RWPE1 (cell line): ENCODE measurements at regions of chr2 and their contacts with region 1.

Region 1: GRCh38 chr2:80499095-80499494 is 194.5 kb upstream of the LRRTM1 start:
- DNase-seq: peak; percentile 29
- H3K27ac ChIP-seq: no peak overlapping the region
- CTCF ChIP-seq: peak; percentile 42

Region 2: DNA sequence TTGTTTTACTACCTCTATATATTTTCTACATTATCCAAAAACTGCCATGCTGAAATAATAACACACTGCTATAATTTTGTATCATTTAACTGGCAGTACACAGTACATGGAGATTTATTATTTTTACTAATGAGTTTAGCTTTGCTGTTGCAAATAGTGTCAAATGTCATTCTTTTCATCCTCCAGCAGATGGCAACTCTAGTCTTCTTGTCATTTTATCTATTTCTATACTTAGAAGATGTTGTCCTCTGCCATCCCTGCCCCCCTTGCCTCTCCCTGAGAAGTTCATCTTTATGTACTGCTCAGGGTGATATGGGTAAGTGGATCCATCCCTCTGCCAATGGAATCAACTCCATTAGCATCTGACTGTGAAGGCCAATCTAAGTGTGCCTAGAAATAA is 172.9 kb before region 1 on chr2:
- CTCF ChIA-PET with region 1: interaction called, 11 read pairs
- POLR2A ChIA-PET with region 1: no interaction called
- DNase-seq: peak; percentile 12
- H3K27ac ChIP-seq: no peak overlapping the region
- CTCF ChIP-seq: peak; percentile 29; the same call in 1 of the 2 replicates